Left colon (tissue), 2 donors: ENCODE measurements at regions of chr19 and their contacts with region 1.

Region 1: DNA sequence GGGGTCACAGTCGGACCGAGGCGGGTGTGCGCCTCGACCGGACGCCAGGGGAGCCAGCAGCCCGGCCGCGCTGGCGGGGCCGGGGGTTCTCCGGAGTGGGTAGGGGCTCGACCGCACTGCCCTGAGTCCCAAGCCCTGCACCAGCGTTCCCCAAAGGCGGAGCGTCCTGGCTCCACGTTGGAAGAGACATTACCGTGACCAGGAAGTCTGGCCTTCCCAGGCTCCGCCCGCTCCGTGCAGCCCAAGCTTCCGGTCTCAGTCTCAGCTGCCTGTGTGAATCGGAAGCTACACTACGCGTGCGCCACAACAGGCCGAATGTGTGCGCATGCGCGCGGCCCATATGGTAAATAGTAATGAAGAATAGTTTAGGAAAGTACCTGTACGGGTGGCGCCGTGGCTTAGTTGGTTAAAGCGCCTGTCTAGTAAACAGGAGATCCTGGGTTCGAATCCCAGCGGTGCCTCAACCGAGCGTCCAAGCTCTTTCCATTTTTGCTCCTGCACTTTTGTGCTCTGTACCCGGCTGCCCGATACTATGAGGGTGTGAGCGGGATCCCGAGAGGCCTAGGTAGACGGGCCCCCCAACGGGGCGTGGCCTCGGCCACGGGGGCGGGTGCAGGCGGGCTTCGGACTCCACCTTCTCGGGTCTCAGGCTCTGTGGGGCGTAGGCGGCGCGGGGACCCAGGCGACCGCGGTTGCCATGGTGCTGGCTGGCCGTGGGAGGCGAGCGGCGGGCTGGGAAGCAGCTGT is 17.3 kb upstream of the LRP3 start:
- DNase-seq: peak; percentile 96
- ATAC-seq: peak; percentile 88

Region 2: GRCh38 chr19:33143897-33144405 is 32.9 kb before region 1 on chr19:
- intact Hi-C with region 1: loop called in 1 of 2 experiments (anchors 5 kb)
- DNase-seq: peak; percentile 45 to 55
- ATAC-seq: peak; percentile 95

Region 3: GRCh38 chr19:33302175-33302973 is 125.5 kb after region 1 on chr19 and contains the start of gene CEBPA:
- intact Hi-C with region 1: loop called in 1 of 2 experiments (anchors 10 kb)
- DNase-seq: peak; percentile 78 to 85
- ATAC-seq: peak; percentile 63
- total RNA-seq, gene CEBPA: 70.6 to 73.5 TPM

Region 4: DNA sequence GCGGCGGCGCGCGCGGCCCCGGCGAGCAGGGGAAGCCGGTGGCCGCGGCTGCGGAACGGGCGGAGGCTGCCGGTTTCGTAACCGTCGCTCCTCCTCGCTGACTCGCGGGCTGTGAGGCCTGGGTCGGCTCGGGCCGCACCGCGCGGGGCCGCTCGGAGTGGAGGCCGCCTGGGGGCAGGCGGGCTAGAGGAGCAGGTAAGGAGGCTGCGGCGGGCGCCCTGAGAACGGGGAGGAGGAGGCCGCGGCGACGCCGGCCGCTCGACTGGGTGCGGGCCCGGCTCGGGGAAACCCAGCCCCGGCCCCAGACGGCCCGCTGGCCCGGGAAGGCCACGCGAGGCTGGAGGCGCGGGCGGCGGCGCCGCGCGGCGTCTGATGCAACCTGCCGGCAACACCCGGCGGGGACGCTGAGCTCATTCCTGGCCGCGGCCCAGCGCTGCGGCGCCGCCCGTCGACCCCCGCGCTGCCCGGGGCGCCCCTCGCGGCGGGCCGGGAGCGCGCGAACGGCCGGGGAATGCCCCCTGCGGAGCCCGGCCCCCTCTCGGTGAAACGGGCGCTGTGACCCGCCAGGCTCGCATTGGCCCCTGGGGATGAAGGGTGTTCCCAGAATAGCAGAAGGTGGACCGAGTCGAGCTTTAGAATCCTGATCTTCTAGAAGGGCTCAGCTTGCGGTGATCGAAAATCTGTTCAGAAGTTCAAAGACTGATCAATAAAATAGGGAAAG is 197.0 kb after region 1 on chr19 and contains the start of gene CEBPG:
- intact Hi-C with region 1: no loop called
- DNase-seq: peak in 1 of 2 donors; percentile 71
- ATAC-seq: peak; percentile 22
- total RNA-seq, gene CEBPG: 70.1 to 73.2 TPM